Activated CD4-positive, alpha-beta T cell treated with anti-CD3 and anti-CD28 coated beads for 36 hours (primary cell): ENCODE measurements at regions of chr22 and their contacts with region 1.

Region 1: DNA sequence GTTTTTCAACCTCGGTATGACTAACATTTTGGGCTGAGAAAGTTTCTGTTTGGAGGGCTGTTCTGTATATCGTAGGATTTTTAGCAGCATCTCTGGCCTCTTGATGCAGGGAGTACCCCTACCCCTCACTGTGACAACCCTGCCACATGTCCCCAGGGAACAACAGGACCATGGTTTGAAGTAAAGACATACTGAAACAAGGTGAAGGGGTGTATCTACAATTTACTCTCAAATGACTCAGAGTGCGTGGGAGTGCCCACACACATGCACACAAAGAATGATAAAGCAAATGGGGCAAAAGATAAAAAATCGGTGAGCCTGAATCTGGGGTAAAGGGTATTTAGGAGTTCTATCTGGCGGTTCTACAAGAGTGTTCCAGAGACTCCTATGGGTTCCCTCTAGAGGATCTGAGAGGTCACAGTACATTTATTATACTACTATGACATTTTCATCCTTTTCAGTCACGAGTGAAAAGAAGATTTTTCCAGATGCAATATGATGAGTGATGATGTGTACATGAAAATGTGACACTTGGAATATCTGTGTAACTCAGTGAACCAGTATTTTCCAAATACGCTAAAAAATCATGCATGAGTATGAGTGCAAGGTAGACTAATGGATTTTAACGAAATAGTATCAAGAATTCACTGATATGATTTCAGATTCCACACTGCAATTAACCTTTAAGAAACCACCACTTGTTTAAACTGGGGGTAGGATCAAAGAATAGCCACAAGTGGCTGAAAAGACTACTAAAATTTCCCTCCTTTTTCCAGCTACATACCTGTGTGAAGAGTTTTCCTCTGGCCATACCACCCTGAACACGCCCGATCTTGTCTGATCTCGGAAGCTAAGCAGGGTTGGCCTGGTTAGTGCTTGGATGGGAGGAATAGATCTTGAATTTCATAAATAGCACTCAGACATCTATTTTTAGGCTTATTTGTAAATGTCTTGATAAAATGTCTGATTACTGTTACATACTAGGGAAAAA is 56.3 kb upstream of the YPEL1 start:
- DNase-seq: peak; percentile 70
- ATAC-seq: peak; percentile 93
- H3K4me3 Mint-ChIP-seq: peak overlapping the region; percentile 15
- H3K27ac Mint-ChIP-seq: peak overlapping the region; percentile 56
- H3K4me1 Mint-ChIP-seq: peaks cover 16% of the 10 kb centered on the region
- H3K27me3 Mint-ChIP-seq: no peaks in the 10 kb centered on the region

Region 2: GRCh38 chr22:21735200-21736076 is 56.5 kb before region 1 on chr22 and contains the start of gene YPEL1:
- CTCF ChIA-PET with region 1: no interaction called
- POLR2A ChIA-PET with region 1: no interaction called
- intact Hi-C with region 1: loop called in 1 of 2 experiments (anchors 5 kb)
- DNase-seq: peak; percentile 96
- ATAC-seq: peak; percentile 95
- H3K4me3 Mint-ChIP-seq: peak within 1 kb of the TSS; percentile 84
- H3K27ac Mint-ChIP-seq: peak within 1 kb of the TSS; percentile 79
- H3K4me1 Mint-ChIP-seq: peaks cover 10% of the 10 kb centered on the region
- H3K27me3 Mint-ChIP-seq: peaks cover 3% of the 10 kb centered on the region
- total RNA-seq, gene YPEL1: 1.0 to 1.5 TPM

Region 3: DNA sequence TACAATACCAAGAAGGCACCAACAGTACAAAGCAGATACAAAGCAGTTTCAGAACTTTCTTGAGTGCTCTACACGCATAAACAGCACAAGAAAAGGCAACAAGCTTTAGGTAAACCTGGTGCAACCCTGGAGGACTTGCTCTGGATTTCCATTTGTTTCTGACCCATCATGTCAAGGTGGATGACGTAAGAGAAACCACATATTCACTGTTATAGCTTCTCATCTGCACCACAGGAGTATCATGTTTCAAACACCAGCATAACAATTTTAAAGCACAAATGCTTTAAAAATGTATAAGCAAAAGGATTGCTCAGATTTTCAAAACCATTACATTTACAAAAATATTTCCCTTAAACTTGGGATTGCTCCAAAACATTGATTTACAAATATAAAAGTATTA is 31.3 kb before region 1 on chr22:
- CTCF ChIA-PET with region 1: interaction called, 3 read pairs
- POLR2A ChIA-PET with region 1: no interaction called
- intact Hi-C with region 1: loop called in 1 of 2 experiments (anchors 1 kb)
- DNase-seq: no peak
- ATAC-seq: no peak
- H3K4me3 Mint-ChIP-seq: no peak overlapping the region
- H3K27ac Mint-ChIP-seq: no peak overlapping the region
- H3K4me1 Mint-ChIP-seq: peaks cover 50% of the 10 kb centered on the region
- H3K27me3 Mint-ChIP-seq: no peaks in the 10 kb centered on the region

Region 4: GRCh38 chr22:21816787-21817496 is 25.0 kb after region 1 on chr22:
- CTCF ChIA-PET with region 1: interaction called, 3 read pairs
- POLR2A ChIA-PET with region 1: interaction called, 3 read pairs
- intact Hi-C with region 1: loop called in 1 of 2 experiments (anchors 1 kb)
- DNase-seq: peak; percentile 23
- ATAC-seq: peak; percentile 91
- H3K4me3 Mint-ChIP-seq: peak overlapping the region; percentile 67
- H3K27ac Mint-ChIP-seq: peak overlapping the region; percentile 95
- H3K4me1 Mint-ChIP-seq: peaks cover 63% of the 10 kb centered on the region
- H3K27me3 Mint-ChIP-seq: no peaks in the 10 kb centered on the region

Region 5: GRCh38 chr22:21938071-21938822 is 146.3 kb after region 1 on chr22:
- CTCF ChIA-PET with region 1: interaction called, 3 read pairs
- POLR2A ChIA-PET with region 1: no interaction called
- intact Hi-C with region 1: loop called in 1 of 2 experiments (anchors 1 kb)
- DNase-seq: peak; percentile 95
- ATAC-seq: peak; percentile 95
- H3K4me3 Mint-ChIP-seq: peak overlapping the region; percentile 67
- H3K27ac Mint-ChIP-seq: peak overlapping the region; percentile 79
- H3K4me1 Mint-ChIP-seq: peaks cover 43% of the 10 kb centered on the region
- H3K27me3 Mint-ChIP-seq: no peaks in the 10 kb centered on the region